ENCODE measurements at regions of chr14 and their contacts with region 1.

Region 1: GRCh38 chr14:33897878-33898535 is 52.9 kb downstream of the EGLN3 start:
- DNase-seq: no peak
- ATAC-seq: no peak
- H3K4me3 ChIP-seq: no peak overlapping the region
- H3K27ac ChIP-seq: no peak overlapping the region
- H3K4me1 ChIP-seq: no peaks in the 10 kb centered on the region
- H3K27me3 ChIP-seq: peaks cover 9% of the 10 kb centered on the region; the same call in 1 of the 2 replicates
- CTCF ChIP-seq: no peak

Region 2: DNA sequence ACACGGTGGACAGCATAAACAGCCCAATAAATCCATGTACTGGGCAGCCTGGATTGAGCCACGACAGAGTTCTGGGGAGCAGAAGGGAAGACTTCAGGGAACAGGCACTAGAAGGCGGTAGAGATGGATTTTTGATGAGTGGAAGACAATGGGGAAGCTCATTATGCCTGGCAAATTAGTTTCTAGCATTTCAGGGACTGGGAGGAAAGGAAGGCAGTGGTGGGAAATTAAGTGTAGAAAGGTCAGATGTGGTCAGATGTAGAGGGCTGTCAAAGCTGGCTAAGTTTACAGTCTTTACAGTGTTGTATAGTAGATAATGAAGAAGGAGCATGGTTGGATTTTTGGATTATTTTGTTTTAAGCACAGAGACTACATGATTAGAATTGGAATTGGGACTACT is 43.7 kb after region 1 on chr14:
- CTCF ChIA-PET with region 1: no interaction called
- POLR2A ChIA-PET with region 1: interaction called, 14 read pairs
- intact Hi-C with region 1: no loop called
- DNase-seq: no peak
- ATAC-seq: no peak
- H3K4me3 ChIP-seq: no peak overlapping the region
- H3K27ac ChIP-seq: no peak overlapping the region
- H3K4me1 ChIP-seq: peaks cover 14% of the 10 kb centered on the region
- H3K27me3 ChIP-seq: peaks cover 4% of the 10 kb centered on the region
- CTCF ChIP-seq: no peak

Region 3: GRCh38 chr14:34220921-34221320 is 322.9 kb after region 1 on chr14:
- CTCF ChIA-PET with region 1: no interaction called
- POLR2A ChIA-PET with region 1: interaction called, 33 read pairs
- intact Hi-C with region 1: no loop called
- DNase-seq: no peak
- ATAC-seq: no peak
- H3K4me3 ChIP-seq: no peak overlapping the region
- H3K27ac ChIP-seq: no peak overlapping the region
- H3K4me1 ChIP-seq: peaks cover 20% of the 10 kb centered on the region
- H3K27me3 ChIP-seq: no peaks in the 10 kb centered on the region
- CTCF ChIP-seq: no peak

Measured in PC-3 (cell line).